ENCODE measurements at regions of chr3 and their contacts with region 1.

Region 1: DNA sequence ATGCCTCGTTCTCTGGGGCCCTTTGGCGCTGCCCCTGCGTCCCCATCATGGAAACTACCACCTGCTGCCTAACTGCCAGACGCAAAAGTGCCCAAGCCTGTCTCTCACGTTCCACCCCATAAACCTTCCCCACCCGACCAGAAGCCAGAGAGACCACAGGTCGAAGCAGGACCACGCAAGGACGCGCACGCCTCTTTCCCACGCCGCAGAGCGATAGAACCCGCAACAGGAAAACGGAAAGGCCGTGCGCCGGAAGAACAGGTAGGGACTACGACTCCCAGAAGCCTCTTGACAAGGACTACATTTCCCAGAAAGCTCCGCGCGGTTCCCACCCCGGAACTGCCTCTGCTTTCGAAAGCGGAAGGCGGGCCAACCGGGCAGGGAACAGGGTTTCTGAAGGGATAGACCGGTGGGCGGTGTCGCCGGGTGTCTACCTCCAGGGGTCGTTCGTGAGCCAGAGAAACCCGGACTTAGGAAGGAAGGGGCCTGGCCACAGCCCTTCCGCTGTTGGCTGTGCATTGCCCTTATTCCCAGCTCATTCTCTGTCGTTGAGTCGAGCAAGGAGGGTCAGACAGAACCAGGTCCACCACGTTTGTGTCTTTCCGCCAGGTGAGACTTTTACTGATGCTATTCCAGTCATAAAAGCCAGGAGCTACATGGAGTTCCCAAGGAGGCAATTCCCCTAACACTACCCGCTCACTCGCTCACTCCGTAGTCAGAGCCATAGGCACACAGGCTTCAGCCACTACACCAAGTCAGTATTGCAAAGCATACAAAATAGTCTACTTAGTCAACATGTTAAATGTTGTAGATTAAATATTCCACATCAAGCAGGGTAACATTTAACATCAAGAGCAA is 56.6 kb upstream of the ZBTB38 start:
- DNase-seq: peak; percentile 100
- ATAC-seq: peak; percentile 94
- H3K4me3 Mint-ChIP-seq: peak overlapping the region; percentile 94
- H3K27ac Mint-ChIP-seq: peak overlapping the region; percentile 87
- H3K4me1 Mint-ChIP-seq: peaks cover 22% of the 10 kb centered on the region
- H3K27me3 Mint-ChIP-seq: peaks cover 21% of the 10 kb centered on the region
- CTCF ChIP-seq: peak; percentile 43

Region 2: DNA sequence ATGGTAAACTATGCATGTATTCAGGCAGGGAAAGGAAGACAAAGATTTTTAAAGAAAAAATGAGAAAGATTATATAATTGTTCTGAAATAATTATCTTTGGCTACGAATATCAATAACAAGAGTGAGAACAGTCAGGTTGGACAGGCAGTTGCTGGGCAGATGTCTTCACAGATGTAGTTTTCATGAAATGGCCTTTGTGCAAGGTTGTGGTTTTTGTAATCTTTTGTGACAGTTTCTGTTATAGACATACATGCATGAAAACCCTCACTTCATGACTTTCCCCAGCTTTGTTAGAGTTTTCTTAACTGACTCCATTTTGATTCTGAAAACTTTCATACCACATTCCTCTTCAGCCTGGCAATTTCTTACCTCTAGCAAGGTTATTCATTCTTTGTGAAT is 404.9 kb before region 1 on chr3:
- CTCF ChIA-PET with region 1: no interaction called
- POLR2A ChIA-PET with region 1: no interaction called
- DNase-seq: no peak
- ATAC-seq: no peak
- H3K4me3 Mint-ChIP-seq: no peak overlapping the region
- H3K27ac Mint-ChIP-seq: no peak overlapping the region
- H3K4me1 Mint-ChIP-seq: 0 out of 2 replicates have a peak, but pooled peaks cover 2% of the 10 kb centered on the region
- H3K27me3 Mint-ChIP-seq: no peaks in the 10 kb centered on the region; the same call in 1 of the 2 replicates
- CTCF ChIP-seq: no peak

Region 3: DNA sequence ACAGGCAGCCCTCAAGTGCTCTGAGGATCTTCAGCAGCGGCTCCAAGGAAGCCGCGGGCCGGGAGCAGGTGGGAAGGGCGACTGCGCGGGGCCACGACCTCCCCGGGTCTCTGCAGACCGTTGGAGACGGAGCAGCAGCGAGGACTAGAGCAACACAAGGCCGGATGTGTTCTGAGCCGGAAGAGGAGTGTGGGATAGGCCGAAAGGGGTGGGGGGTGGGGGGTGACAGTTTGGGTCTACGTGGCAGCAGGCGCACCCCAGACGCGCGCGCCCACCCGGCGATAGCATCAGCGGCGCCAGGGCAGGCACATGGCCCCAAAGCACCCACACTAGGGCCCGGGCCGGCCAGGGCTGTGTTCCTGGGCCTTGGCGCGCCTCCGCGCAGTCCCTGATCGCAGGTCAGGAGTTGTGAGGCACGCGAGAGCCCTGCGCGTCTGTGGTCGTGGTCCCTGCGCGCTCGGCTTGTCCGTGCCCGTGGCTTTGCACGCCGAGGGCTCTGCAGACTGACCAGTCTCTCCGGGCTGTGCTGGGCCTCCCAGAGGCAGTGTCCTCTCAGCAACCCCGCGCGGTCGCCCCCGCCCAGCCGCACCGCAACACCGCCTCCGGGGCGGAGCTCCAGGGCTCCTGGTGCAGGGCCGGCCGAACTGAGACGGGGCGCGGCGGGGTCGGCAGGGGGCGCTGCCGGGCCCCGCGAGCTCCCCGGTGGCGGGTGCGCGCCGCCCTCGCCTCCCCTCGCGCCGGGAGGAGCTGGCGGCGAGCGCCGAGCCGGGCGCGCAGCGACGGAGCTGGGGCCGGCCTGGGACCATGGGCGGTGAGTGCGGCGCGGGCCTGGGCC is 80.4 kb before region 1 on chr3 and contains the start of gene PXYLP1:
- CTCF ChIA-PET with region 1: interaction called, 37 read pairs
- POLR2A ChIA-PET with region 1: no interaction called
- DNase-seq: peak; percentile 94
- ATAC-seq: peak; percentile 88
- H3K4me3 Mint-ChIP-seq: peak within 1 kb of the TSS; percentile 77
- H3K27ac Mint-ChIP-seq: 0 out of 2 replicates have a peak within 1 kb of the TSS, but pooled peaks have one; percentile 5
- H3K4me1 Mint-ChIP-seq: peaks cover 52% of the 10 kb centered on the region
- H3K27me3 Mint-ChIP-seq: peaks cover 39% of the 10 kb centered on the region
- CTCF ChIP-seq: peak; percentile 72
- total RNA-seq, gene PXYLP1: 16.9 to 20.1 TPM (median 19.7 TPM) in 3 replicates

Region 4: DNA sequence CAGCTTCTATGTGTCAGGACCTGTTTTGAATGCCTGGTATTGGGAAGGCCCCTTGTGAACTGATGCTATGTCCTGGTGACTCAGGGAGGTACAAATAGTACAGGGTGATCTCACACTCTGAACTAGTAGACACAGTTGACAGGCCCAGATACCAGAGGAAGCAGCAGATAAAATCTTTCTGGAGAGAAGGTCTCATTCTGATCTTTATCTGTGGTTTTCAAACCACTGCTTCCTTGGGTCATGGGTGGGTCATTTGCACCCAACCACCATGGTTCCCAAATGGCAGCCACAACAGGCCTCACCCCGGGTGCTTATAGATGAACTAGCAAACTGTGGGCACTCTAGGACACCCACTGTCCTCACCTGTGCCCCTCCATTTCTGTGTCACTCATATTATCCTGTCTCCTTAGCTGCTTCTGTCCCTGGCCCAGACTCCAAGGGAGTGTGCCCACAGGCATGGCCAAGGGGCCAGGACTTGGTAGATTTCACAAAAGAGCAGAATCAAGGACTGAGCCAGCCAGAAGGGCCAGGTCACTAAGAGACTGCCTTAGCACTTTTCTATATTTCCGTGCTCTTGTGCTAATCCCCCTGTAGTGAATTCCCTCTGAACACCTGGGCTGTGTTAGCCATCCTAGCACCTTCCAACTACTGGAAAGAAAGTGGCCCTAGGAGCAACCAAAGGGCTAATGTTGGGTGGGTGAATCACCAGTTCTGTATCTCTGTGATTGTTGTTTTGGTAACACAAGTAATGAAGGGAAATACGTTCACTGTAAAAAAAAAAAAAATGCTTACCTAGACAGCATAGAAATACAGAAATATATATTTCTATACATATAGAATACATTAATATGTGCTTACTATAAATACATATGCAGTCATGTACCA is 36.5 kb before region 1 on chr3:
- CTCF ChIA-PET with region 1: no interaction called
- POLR2A ChIA-PET with region 1: no interaction called
- DNase-seq: no peak
- ATAC-seq: no peak
- H3K4me3 Mint-ChIP-seq: no peak overlapping the region
- H3K27ac Mint-ChIP-seq: no peak overlapping the region
- H3K4me1 Mint-ChIP-seq: 0 out of 2 replicates have a peak, but pooled peaks cover 7% of the 10 kb centered on the region
- H3K27me3 Mint-ChIP-seq: no peaks in the 10 kb centered on the region
- CTCF ChIP-seq: no peak

Region 5: DNA sequence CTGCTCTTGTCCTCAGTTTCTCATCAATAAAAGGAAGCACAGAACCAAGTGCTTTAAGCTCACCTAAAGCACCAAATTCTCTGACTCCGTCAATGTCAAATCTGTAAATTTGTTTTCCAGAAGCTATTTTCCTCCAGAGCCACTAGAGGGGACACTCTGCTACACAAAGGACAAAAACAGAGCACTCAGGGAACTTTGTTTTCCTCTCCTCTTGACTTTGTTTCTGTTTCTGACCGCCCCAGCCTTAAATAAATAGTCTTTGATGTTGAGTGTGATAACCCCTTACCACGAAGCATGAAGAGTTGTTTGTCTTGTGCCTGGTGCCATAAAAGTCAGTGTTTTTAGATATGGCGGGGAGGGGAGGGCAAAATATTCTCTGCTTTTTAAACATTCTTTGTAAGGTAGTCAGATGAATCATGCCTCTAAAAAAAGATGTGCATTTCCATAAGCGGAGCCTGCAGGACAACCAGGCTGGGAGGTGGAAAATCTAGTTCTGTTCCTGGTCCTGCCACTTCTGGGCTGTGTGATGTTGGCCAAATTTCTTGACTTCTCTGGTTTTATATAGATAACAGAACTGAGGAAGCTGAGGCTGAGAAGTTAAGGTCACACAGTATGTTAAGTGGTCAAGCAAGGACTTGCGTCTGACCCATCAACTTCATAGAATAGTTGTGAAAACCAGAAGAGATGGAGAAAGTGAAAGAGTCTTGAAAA is 49.3 kb after region 1 on chr3:
- CTCF ChIA-PET with region 1: interaction called, 40 read pairs
- POLR2A ChIA-PET with region 1: no interaction called
- DNase-seq: no peak
- ATAC-seq: peak; percentile 86
- H3K4me3 Mint-ChIP-seq: no peak overlapping the region; the same call in 1 of the 2 replicates
- H3K27ac Mint-ChIP-seq: peak overlapping the region; percentile 26; the same call in 1 of the 2 replicates
- H3K4me1 Mint-ChIP-seq: peaks cover 13% of the 10 kb centered on the region
- H3K27me3 Mint-ChIP-seq: no peaks in the 10 kb centered on the region
- CTCF ChIP-seq: 0 out of 2 replicates have a peak, but pooled peaks have one; percentile 15

Region 6: DNA sequence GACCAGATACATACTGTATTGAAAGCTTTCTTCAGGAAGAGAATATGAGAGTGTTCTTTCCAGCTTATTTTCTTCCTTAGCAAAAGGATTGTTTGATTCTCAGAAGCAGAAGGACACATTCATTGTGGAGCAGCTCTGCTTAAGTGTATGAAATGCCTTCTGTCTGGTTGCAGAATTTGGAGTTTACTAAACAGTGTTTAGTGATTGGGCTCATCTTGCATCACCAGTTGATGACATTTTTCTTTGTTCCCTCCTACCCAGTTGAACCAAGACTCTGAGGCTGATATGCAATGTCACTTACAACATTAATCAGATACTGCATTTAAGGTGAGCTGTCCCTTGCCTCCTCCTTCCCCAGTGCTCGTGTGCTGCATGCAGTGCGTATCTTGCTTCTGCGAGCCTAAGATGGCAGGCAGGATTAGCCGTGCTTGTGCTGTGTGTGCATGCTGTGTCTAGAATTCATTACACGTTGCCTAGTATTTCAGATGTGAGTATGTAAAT is 74.9 kb after region 1 on chr3:
- CTCF ChIA-PET with region 1: interaction called, 11 read pairs
- POLR2A ChIA-PET with region 1: no interaction called
- DNase-seq: no peak
- ATAC-seq: no peak
- H3K4me3 Mint-ChIP-seq: no peak overlapping the region
- H3K27ac Mint-ChIP-seq: peak overlapping the region; percentile 40
- H3K4me1 Mint-ChIP-seq: peaks cover 39% of the 10 kb centered on the region
- H3K27me3 Mint-ChIP-seq: no peaks in the 10 kb centered on the region
- CTCF ChIP-seq: no peak

Region 7: DNA sequence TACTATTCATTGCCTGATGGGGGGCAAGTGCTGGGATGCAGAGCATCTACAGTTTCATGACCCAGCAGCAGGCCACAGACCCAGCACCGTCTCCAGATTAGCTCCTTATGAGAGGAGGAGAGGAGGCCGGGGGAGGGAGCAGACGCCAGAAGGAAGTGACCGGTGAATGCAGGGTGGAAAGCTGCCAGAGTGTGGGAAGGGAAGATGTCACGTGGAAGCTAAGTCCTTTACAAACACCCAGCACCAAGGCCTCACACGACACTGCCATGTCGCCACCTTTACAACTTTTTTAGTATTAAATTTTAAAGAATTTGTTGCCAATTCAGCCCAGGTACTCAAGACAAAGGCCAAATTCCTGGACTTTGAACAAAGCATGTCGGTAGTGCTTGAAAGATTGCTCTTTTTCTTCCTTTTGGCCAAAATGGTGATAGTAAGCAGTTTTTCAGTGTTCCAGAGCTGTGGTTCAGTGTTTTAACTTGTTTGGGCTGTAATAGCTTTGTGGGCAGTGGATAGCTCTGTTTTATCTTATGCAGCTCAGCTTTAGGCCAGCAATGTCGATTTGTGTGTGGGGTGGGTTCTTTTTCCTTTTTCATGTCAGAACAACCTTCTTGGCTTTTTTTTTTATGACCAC is 114.8 kb after region 1 on chr3:
- CTCF ChIA-PET with region 1: interaction called, 16 read pairs
- POLR2A ChIA-PET with region 1: no interaction called
- DNase-seq: no peak
- ATAC-seq: peak; percentile 30
- H3K4me3 Mint-ChIP-seq: no peak overlapping the region
- H3K27ac Mint-ChIP-seq: no peak overlapping the region
- H3K4me1 Mint-ChIP-seq: peaks cover 19% of the 10 kb centered on the region
- H3K27me3 Mint-ChIP-seq: no peaks in the 10 kb centered on the region
- CTCF ChIP-seq: no peak

Region 8: GRCh38 chr3:141441381-141442364 is 129.9 kb after region 1 on chr3:
- CTCF ChIA-PET with region 1: interaction called, 42 read pairs
- POLR2A ChIA-PET with region 1: interaction called, 4 read pairs
- DNase-seq: peak; percentile 75
- ATAC-seq: peak; percentile 97
- H3K4me3 Mint-ChIP-seq: no peak overlapping the region
- H3K27ac Mint-ChIP-seq: 0 out of 2 replicates have a peak overlapping the region, but pooled peaks have one; percentile 79
- H3K4me1 Mint-ChIP-seq: peaks cover 8% of the 10 kb centered on the region
- H3K27me3 Mint-ChIP-seq: no peaks in the 10 kb centered on the region
- CTCF ChIP-seq: peak; percentile 77

Region 9: GRCh38 chr3:141460097-141460704 is 148.5 kb after region 1 on chr3:
- CTCF ChIA-PET with region 1: interaction called, 119 read pairs
- POLR2A ChIA-PET with region 1: no interaction called
- DNase-seq: peak; percentile 93
- ATAC-seq: peak; percentile 99
- H3K4me3 Mint-ChIP-seq: no peak overlapping the region
- H3K27ac Mint-ChIP-seq: no peak overlapping the region
- H3K4me1 Mint-ChIP-seq: peaks cover 11% of the 10 kb centered on the region
- H3K27me3 Mint-ChIP-seq: peaks cover 4% of the 10 kb centered on the region
- CTCF ChIP-seq: peak; percentile 57